IMR-90 (cell line): ENCODE measurements at regions of chr2 and their contacts with region 1.

Region 1: GRCh38 chr2:30711646-30712085 is 95.6 kb downstream of the CAPN13 start:
- DNase-seq: peak; percentile 90
- ATAC-seq: peak; percentile 90
- H3K4me3 ChIP-seq: no peak overlapping the region
- H3K27ac ChIP-seq: no peak overlapping the region
- H3K4me1 ChIP-seq: peaks cover 2% of the 10 kb centered on the region; the same call in 1 of the 2 replicates
- H3K27me3 ChIP-seq: peaks cover 5% of the 10 kb centered on the region; the same call in 1 of the 2 replicates
- CTCF ChIP-seq: peak; percentile 100
- POLR2A ChIP-seq: no peak
- RAD21 ChIP-seq: peak; percentile 93

Region 2: DNA sequence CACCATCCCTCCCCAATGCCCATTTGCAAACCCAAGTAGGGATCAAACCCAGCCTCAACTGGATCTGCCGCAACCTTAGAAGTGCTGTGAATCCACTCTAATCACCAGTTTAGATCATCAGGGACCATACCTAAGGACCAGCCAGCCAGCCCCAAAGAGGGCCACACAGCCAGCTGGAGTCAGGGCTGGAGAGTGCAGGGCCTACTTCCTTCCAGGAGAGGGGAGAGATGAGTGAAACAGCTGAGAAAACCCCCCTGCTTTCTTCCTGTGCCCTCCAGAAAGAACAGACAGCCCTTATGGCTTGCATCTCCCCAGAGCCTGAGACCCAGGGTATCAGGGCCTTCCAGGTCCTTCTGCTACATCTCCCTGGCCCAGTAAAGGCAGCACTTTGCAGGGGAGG is 539.0 kb before region 1 on chr2:
- CTCF ChIA-PET with region 1: interaction called, 14 read pairs
- POLR2A ChIA-PET with region 1: no interaction called
- dilution Hi-C with region 1: no loop called
- in situ Hi-C with region 1: loop called (anchors 5 kb)
- intact Hi-C with region 1: loop called (anchors 2 kb)
- DNase-seq: no peak
- ATAC-seq: no peak
- H3K4me3 ChIP-seq: no peak overlapping the region
- H3K27ac ChIP-seq: no peak overlapping the region
- H3K4me1 ChIP-seq: no peaks in the 10 kb centered on the region
- H3K27me3 ChIP-seq: no peaks in the 10 kb centered on the region; the same call in 1 of the 2 replicates
- CTCF ChIP-seq: no peak
- POLR2A ChIP-seq: no peak
- RAD21 ChIP-seq: no peak

Region 3: GRCh38 chr2:30231212-30231995 is 480.3 kb before region 1 on chr2 and contains the start of gene LBH:
- CTCF ChIA-PET with region 1: interaction called, 6 read pairs
- POLR2A ChIA-PET with region 1: no interaction called
- dilution Hi-C with region 1: no loop called
- in situ Hi-C with region 1: no loop called
- intact Hi-C with region 1: loop called (anchors 10 kb)
- DNase-seq: peak; percentile 90
- ATAC-seq: peak; percentile 73
- H3K4me3 ChIP-seq: peak within 1 kb of the TSS; percentile 84
- H3K27ac ChIP-seq: peak within 1 kb of the TSS; percentile 84
- H3K4me1 ChIP-seq: peaks cover 13% of the 10 kb centered on the region
- H3K27me3 ChIP-seq: no peaks in the 10 kb centered on the region
- CTCF ChIP-seq: 0 out of 2 replicates have a peak, but pooled peaks have one; percentile 7
- POLR2A ChIP-seq: peak; percentile 100
- RAD21 ChIP-seq: no peak
- total RNA-seq, gene LBH: 155 and 158 TPM in 2 replicates

Region 4: GRCh38 chr2:30373881-30374302 is 337.8 kb before region 1 on chr2:
- CTCF ChIA-PET with region 1: no interaction called
- POLR2A ChIA-PET with region 1: no interaction called
- dilution Hi-C with region 1: no loop called
- in situ Hi-C with region 1: no loop called
- intact Hi-C with region 1: loop called (anchors 2 kb)
- DNase-seq: peak; percentile 89
- ATAC-seq: peak; percentile 87
- H3K4me3 ChIP-seq: no peak overlapping the region
- H3K27ac ChIP-seq: peak overlapping the region; percentile 40
- H3K4me1 ChIP-seq: peaks cover 14% of the 10 kb centered on the region
- H3K27me3 ChIP-seq: no peaks in the 10 kb centered on the region
- CTCF ChIP-seq: no peak
- POLR2A ChIP-seq: no peak
- RAD21 ChIP-seq: no peak; the same call in 1 of the 2 replicates

Region 5: DNA sequence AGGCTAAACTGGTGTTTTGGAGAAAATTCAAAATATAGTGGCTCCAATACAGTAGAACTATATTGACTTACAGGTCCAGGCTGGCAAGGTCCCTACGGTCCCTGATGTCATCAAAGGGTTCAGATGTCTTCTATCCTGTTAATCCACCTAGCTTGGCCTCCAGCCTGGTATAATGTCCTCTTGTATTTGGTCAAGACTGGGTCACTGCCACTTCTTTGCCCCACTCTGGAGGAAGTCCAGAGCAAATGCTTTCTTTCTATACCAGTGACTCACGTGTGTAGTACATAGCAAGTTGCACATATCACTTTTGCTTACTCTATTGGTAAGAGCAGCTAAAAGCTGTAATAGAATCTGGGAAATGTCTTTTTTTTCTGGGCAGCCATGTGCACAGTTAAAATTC is 183.8 kb before region 1 on chr2:
- CTCF ChIA-PET with region 1: no interaction called
- POLR2A ChIA-PET with region 1: no interaction called
- dilution Hi-C with region 1: no loop called
- in situ Hi-C with region 1: no loop called
- intact Hi-C with region 1: no loop called
- DNase-seq: peak; percentile 52
- ATAC-seq: peak; percentile 79
- H3K4me3 ChIP-seq: no peak overlapping the region
- H3K27ac ChIP-seq: peak overlapping the region; percentile 43; the same call in 1 of the 2 replicates
- H3K4me1 ChIP-seq: peaks cover 2% of the 10 kb centered on the region
- H3K27me3 ChIP-seq: no peaks in the 10 kb centered on the region
- CTCF ChIP-seq: no peak
- POLR2A ChIP-seq: no peak
- RAD21 ChIP-seq: no peak

Region 6: GRCh38 chr2:30679426-30680088 is 32.1 kb before region 1 on chr2:
- CTCF ChIA-PET with region 1: no interaction called
- POLR2A ChIA-PET with region 1: no interaction called
- dilution Hi-C with region 1: no loop called
- in situ Hi-C with region 1: no loop called
- intact Hi-C with region 1: no loop called
- DNase-seq: peak; percentile 59
- ATAC-seq: no peak
- H3K4me3 ChIP-seq: no peak overlapping the region
- H3K27ac ChIP-seq: no peak overlapping the region
- H3K4me1 ChIP-seq: no peaks in the 10 kb centered on the region
- H3K27me3 ChIP-seq: no peaks in the 10 kb centered on the region
- CTCF ChIP-seq: no peak
- POLR2A ChIP-seq: no peak
- RAD21 ChIP-seq: no peak

Region 7: GRCh38 chr2:30846971-30847729 is 135.5 kb after region 1 on chr2:
- CTCF ChIA-PET with region 1: no interaction called
- POLR2A ChIA-PET with region 1: no interaction called
- dilution Hi-C with region 1: no loop called
- in situ Hi-C with region 1: no loop called
- intact Hi-C with region 1: no loop called
- DNase-seq: no peak
- ATAC-seq: no peak
- H3K4me3 ChIP-seq: no peak overlapping the region
- H3K27ac ChIP-seq: no peak overlapping the region
- H3K4me1 ChIP-seq: no peaks in the 10 kb centered on the region
- H3K27me3 ChIP-seq: no peaks in the 10 kb centered on the region
- CTCF ChIP-seq: no peak
- POLR2A ChIP-seq: no peak
- RAD21 ChIP-seq: no peak

Region 8: DNA sequence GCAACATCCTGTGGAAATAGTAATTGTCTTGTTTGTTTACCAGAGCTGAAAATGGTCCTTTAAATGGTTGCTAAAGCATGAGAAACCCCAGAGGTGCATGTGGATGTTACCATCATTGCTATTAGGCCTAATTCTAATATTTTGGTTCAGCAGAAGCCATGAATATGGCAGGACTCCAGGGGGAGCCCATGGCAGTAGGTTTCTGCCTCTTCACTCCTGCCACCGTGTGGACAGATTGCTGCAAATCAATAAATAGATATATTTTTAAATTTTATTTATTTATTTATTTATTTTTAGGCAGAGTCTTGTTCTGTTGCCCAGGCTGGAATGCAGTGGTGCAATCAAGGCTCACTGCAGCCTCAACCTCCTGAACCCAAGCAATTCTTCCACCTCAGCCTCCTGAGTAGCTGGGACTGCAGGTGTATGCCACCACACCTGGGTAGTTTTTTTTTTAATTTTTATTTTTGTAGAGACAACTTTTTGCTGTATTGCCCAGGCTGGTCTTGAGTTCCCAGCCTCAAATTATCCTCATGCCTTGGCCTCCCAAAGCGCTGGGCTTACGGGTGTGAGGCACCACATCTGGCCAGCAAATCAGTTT is 150.5 kb after region 1 on chr2:
- CTCF ChIA-PET with region 1: interaction called, 6 read pairs
- POLR2A ChIA-PET with region 1: no interaction called
- dilution Hi-C with region 1: no loop called
- in situ Hi-C with region 1: no loop called
- intact Hi-C with region 1: loop called (anchors 5 kb)
- DNase-seq: peak; percentile 73
- ATAC-seq: peak; percentile 53
- H3K4me3 ChIP-seq: no peak overlapping the region
- H3K27ac ChIP-seq: no peak overlapping the region
- H3K4me1 ChIP-seq: no peaks in the 10 kb centered on the region
- H3K27me3 ChIP-seq: no peaks in the 10 kb centered on the region
- CTCF ChIP-seq: peak; percentile 88
- POLR2A ChIP-seq: no peak
- RAD21 ChIP-seq: peak; percentile 49

Region 9: GRCh38 chr2:31434911-31435310 is 723.2 kb after region 1 on chr2:
- CTCF ChIA-PET with region 1: no interaction called
- POLR2A ChIA-PET with region 1: no interaction called
- dilution Hi-C with region 1: no loop called
- in situ Hi-C with region 1: no loop called
- intact Hi-C with region 1: loop called (anchors 10 kb)
- DNase-seq: peak; percentile 17
- ATAC-seq: peak; percentile 42
- H3K4me3 ChIP-seq: no peak overlapping the region
- H3K27ac ChIP-seq: no peak overlapping the region
- H3K4me1 ChIP-seq: no peaks in the 10 kb centered on the region
- H3K27me3 ChIP-seq: no peaks in the 10 kb centered on the region; the same call in 1 of the 2 replicates
- CTCF ChIP-seq: peak; percentile 41
- POLR2A ChIP-seq: no peak
- RAD21 ChIP-seq: peak; percentile 61